ENCODE measurements at regions of chr11 and their contacts with region 1.

Region 1: GRCh38 chr11:64692764-64693331 is 30.1 kb downstream of the NRXN2 start:
- DNase-seq: no peak
- H3K4me3 ChIP-seq: peak overlapping the region in 1 of 3 donors; percentile 17
- H3K27ac ChIP-seq: no peak overlapping the region
- H3K4me1 ChIP-seq: no peaks in the 10 kb centered on the region
- H3K27me3 ChIP-seq: peaks cover 0 to 12% of the 10 kb centered on the region in 2 donors
- CTCF ChIP-seq: no peak
- POLR2A ChIP-seq: no peak

Region 2: DNA sequence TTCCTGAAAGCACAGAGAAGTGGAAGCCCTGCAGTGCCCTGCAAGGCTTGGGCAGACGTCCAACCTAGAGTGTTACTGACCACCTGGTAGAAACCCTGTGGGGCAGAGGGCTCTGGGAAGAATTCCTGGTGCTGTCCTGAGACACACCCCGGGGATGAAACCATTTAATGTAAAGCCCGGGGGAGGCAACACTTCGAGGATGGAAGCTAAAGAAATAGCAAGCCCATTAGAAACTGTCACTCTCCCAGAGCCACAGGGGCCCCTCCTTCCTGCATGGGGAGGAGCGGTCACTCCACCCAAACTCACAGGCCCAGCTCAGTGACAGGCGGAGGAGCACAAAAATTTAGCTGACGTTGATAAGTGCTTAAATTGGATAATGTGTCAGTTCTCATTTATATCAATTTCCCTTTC is 27.4 kb before region 1 on chr11:
- intact Hi-C with region 1: loop called (anchors 1 kb)
- DNase-seq: no peak
- H3K4me3 ChIP-seq: no peak overlapping the region
- H3K27ac ChIP-seq: no peak overlapping the region
- H3K4me1 ChIP-seq: no peaks in the 10 kb centered on the region
- H3K27me3 ChIP-seq: peaks cover 0 to 5% of the 10 kb centered on the region in 2 donors
- CTCF ChIP-seq: no peak
- POLR2A ChIP-seq: no peak

Region 3: DNA sequence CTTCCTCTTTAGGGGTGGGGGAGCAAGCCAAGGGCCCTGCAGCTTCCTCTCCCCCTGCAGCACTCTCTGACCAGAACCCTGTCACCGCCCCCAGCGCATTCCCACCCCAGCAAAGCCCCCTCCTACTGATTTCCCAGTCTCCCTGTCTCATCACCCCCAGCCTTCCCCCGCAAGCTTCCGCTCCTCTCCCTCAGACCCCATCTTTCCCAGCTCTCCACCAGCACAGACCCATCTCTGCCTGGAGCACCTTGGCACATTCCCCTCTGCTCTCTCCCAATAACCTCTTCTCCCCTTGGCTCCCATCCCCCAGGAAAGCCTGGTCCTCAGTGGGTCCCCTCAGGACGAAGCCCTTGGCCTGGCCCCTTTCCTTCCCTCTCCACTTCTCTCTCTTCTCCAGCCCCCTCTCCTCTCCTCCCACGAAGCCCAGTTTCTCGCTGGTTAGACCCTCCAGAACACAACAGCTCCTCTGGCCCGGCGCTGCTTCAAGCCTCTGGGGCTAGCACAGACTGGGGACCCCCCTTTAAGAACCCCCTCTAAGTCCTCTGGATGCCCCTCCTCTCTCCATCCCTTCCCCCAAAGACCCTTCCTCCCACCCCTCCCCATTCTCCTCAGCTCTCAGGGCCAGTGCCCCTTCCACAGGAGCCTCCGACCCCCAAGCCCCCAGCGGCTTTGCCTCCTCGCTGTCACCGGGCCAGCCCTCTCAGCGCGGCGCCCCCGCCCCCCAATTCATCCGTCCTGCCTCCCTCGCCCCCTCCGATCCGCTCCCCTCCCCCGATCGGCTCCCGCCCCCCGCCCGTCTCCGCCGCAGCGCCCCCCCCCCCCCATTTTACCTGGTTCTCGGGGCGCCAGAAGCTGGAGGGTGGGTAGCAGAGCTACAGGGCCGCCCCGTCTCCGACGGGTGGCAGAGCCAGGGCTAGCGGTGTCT is 29.6 kb after region 1 on chr11:
- intact Hi-C with region 1: loop called (anchors 1 kb)
- DNase-seq: no peak
- H3K4me3 ChIP-seq: peak overlapping the region in 1 of 3 donors; percentile 86
- H3K27ac ChIP-seq: no peak overlapping the region
- H3K4me1 ChIP-seq: no peaks in the 10 kb centered on the region
- H3K27me3 ChIP-seq: peaks cover 2 to 53% of the 10 kb centered on the region in 2 donors
- CTCF ChIP-seq: no peak
- POLR2A ChIP-seq: no peak

Region 4: DNA sequence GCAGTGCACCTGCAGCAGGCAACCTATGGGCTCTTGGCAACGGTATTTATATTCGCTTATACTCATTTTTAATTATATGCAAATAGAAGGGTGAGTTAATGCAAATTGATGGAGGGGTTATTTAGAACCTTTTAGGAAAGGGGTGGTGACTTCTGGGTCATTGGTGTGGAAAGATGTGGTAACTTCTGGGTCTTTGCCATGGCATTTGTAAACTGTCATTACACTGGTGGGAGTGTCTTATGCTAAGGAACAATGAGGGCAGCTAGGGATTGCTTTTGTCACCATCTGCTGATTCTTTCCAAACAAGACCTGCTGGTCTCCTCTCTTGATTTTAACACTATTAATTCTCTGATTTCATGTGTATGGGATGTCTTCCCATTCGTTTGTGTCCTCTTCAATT is 1007.5 kb after region 1 on chr11:
- intact Hi-C with region 1: no loop called
- DNase-seq: no peak
- H3K4me3 ChIP-seq: no peak overlapping the region
- H3K27ac ChIP-seq: no peak overlapping the region
- H3K4me1 ChIP-seq: no peaks in the 10 kb centered on the region
- H3K27me3 ChIP-seq: no peaks in the 10 kb centered on the region
- CTCF ChIP-seq: no peak
- POLR2A ChIP-seq: no peak

Region 5: DNA sequence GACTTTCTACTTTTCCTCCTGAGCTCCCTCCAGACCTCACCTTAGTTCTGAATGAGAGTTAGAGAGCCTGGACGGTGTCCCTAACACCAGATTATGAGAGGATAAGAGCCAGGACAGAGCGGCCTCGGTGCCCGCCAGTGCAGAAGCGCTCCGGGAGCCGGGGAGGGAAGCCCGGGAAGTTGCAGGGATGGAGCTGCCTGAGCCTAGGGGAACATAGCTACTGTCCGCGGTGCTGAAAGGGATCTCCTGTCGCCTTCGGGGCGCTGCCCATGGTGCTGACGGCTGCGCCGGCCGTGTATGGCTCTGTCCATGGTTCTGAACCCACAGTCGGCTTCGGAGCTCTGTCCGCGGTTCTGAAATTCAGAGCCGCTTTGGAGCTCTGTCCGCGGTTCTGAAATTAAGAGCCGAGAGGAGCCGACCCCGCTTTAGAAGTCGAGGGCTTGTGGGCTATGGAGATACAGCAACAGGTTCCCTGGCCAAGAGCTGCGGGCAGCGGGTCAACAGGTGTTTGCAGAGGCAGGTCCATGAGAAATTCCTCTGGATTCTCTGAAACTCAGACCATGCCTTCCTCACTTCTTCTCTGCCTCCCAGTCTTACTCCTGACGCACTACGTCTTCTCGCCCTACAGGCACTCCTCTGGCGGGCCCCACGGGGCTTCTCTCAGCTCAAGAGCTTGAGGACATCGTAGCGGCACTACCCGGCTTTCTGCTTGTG is 1728.8 kb after region 1 on chr11:
- intact Hi-C with region 1: no loop called
- DNase-seq: peak; percentile 88 to 95
- H3K4me3 ChIP-seq: no peak overlapping the region
- H3K27ac ChIP-seq: no peak overlapping the region
- H3K4me1 ChIP-seq: no peaks in the 10 kb centered on the region
- H3K27me3 ChIP-seq: peaks cover 7 to 15% of the 10 kb centered on the region in 2 donors
- CTCF ChIP-seq: peak in 1 of 3 donors; percentile 8
- POLR2A ChIP-seq: no peak